ENCODE measurements at regions of chr1 and their contacts with region 1.

Region 1: DNA sequence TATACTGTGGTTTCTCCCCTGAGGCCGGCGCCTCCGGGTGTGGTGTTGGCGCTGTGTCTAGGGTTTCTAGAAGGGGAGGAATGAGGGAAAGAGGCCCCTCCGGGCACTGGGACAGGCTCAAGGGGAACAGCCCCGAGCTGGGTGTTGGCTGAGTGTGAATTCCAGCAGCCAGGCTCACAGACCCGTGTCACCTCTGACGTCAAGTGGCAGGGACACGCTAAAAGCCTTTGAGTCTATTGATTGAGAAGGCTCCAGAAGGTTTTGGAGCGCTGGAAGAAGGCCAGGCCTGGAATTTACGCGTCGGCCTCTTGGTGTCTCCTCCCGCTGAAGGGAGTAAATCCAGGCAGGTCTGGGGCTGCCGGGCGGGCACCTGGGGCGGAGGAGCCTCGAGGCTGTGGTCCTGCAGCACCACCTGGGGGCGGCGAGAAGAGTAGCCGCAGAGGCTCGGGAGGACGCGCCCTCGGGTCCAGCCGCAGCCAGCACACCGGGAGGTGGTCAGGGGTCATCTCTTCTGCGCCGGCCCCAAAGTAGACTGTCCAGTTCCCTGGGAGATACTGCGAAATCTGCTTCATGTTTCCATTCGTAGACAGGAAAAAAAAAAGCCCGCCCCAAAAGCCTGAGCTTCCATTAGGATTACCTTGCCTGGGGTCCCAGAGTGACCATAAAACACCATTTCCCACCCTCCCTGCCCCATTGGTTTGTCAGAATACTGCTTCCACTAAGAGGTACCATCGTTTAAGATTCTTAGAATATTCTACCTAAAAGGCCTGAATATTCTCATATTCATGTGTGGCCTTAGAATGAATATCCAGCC is 61.7 kb downstream of the TLR5 start:
- DNase-seq: peak; percentile 84
- H3K4me3 ChIP-seq: peak overlapping the region; percentile 8
- H3K27ac ChIP-seq: no peak overlapping the region
- H3K4me1 ChIP-seq: no peaks in the 10 kb centered on the region
- H3K27me3 ChIP-seq: no peaks in the 10 kb centered on the region
- CTCF ChIP-seq: peak; percentile 93

Region 2: DNA sequence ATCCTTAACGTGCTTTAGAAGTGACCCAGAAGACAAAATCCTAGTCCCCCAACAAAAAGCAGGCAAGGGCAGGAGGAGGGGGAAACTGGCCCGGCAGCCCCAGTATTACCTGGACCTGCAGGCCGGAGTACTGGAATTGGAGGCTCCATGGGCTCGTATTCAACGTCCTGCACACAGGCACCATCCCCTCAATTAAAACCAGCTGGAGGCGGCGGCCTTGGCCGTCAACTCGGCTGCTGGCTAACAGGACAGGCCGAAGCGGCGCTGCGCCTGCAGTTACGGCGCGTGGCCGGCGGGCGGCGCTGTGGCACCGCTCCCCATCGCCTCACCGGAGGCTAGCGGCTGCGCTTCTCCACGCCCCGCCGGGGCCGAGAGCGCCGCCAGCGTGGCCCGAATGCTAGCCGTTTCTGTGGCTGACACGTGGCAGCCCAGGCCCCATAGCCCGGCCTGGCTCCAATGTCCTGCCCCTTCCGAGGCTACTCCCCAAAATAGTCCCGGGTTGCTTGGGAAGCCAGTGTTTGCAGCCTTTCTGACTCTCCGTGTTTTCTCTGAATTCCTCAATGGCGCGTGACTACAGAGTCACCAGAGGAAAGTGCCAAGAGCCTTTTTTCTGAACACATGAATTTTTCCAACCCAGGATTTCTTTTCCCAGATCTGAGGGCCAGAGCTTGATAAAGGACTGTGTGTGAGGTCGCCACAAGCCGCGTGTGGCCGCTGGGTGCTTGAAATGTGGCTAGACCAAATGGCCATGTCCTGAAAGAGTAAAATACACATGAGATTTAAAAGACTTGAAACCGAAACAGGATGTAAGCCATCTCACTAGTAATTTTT is 616.0 kb before region 1 on chr1:
- intact Hi-C with region 1: loop called (anchors 5 kb)
- DNase-seq: peak; percentile 86
- H3K4me3 ChIP-seq: peak overlapping the region; percentile 14
- H3K27ac ChIP-seq: peak overlapping the region; percentile 72
- H3K4me1 ChIP-seq: no peaks in the 10 kb centered on the region
- H3K27me3 ChIP-seq: no peaks in the 10 kb centered on the region
- CTCF ChIP-seq: peak; percentile 100

Region 3: DNA sequence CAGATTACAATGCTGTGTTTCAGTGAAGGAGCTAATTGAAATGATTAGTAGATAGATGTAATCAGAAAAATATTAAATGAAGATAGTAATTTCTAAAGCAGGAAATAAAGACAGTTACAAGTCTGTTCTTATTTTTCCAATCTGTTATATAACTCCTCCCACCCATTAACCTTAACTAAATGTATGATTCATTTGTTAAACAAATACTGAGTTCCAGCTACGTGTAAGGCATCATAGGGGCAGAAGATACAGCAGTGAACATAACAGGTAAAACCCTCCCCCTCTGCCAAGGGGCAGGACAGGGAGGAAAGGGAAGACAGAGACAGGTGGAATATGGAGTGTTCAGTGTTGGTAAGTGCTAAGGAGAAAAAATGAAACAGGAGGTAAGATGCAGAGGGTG is 344.4 kb before region 1 on chr1 and contains the start of gene FAM177B:
- intact Hi-C with region 1: loop called (anchors 1 kb)
- DNase-seq: no peak
- H3K4me3 ChIP-seq: no peak within 1 kb of the TSS
- H3K27ac ChIP-seq: peak within 1 kb of the TSS; percentile 37
- H3K4me1 ChIP-seq: no peaks in the 10 kb centered on the region
- H3K27me3 ChIP-seq: no peaks in the 10 kb centered on the region
- CTCF ChIP-seq: no peak
- total RNA-seq, gene FAM177B: 8.5 to 19.5 TPM

Region 4: GRCh38 chr1:222792744-222793143 is 288.6 kb before region 1 on chr1:
- intact Hi-C with region 1: loop called (anchors 1 kb)
- DNase-seq: no peak
- H3K4me3 ChIP-seq: no peak overlapping the region
- H3K27ac ChIP-seq: no peak overlapping the region
- H3K4me1 ChIP-seq: no peaks in the 10 kb centered on the region
- H3K27me3 ChIP-seq: no peaks in the 10 kb centered on the region
- CTCF ChIP-seq: peak; percentile 37

Measured in colonic mucosa (tissue), 4 donors.